A673 (cell line): ENCODE measurements at regions of chr9 and their contacts with region 1.

Region 1: DNA sequence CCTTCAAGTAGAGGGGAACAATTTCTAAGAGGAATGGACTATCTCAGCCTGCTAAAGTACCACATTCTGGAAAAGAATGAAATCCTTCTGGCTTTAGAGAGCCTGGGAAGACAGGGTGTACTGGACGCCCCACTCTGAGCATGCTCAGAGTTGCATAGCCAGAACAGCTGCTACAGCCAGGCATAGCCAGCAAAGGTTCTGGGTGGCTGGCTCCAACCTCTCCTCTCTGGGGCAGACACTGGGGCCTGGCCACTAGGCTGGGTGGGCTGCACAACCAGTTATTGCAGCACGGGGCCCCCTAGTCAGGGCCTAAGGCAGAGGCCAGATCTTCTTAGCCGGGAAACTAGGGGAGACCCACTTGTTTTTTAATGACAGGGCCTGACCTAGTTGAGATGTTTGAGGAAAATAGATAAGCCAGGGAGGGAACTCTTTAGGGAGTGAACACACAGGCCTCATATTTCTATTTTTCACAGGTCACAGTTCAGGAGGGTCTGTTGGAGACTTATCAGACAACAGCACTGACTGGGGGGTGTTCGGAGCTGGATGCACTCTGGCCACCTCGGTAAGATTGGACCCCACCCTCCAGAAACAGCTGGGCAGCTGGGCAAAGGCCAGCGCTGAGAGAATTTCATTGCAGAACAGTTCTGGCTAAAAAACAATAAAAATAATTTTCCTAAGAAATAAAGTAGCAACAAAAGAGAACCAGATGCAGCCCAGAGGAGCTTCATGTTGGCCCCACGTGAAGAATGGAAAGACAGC is 142.9 kb downstream of the LPAR1 start:
- DNase-seq: no peak
- H3K4me3 ChIP-seq: no peak overlapping the region
- H3K27ac ChIP-seq: no peak overlapping the region
- H3K4me1 ChIP-seq: peaks cover 27% of the 10 kb centered on the region
- H3K27me3 ChIP-seq: no peaks in the 10 kb centered on the region
- CTCF ChIP-seq: no peak

Region 2: GRCh38 chr9:110977259-110977709 is 82.0 kb after region 1 on chr9:
- CTCF ChIA-PET with region 1: no interaction called
- POLR2A ChIA-PET with region 1: no interaction called
- intact Hi-C with region 1: loop called (anchors 2 kb)
- DNase-seq: peak; percentile 75
- H3K4me3 ChIP-seq: no peak overlapping the region
- H3K27ac ChIP-seq: peak overlapping the region; percentile 90
- H3K4me1 ChIP-seq: peaks cover 71% of the 10 kb centered on the region
- H3K27me3 ChIP-seq: no peaks in the 10 kb centered on the region
- CTCF ChIP-seq: no peak

Region 3: DNA sequence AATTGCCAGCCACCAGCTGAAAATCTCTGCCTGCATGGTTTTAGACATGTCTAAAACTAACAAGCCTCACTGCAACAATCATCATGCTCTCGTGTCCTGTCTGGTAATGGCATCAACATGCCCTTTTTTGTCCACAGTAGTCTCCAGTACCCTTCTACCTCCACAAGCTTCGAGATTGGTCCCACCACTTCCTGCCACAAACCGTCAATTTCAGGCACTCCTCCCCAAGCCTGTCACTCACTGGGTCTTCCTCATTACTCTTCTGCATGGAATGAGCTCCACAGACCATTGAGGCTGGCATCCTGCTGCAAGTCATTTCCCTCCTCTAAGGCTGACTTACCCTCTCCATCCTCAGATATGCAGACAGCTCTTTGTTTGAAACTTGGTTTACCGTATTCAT is 133.9 kb after region 1 on chr9:
- CTCF ChIA-PET with region 1: no interaction called
- POLR2A ChIA-PET with region 1: no interaction called
- intact Hi-C with region 1: loop called (anchors 5 kb)
- DNase-seq: peak; percentile 60
- H3K4me3 ChIP-seq: no peak overlapping the region
- H3K27ac ChIP-seq: peak overlapping the region; percentile 6
- H3K4me1 ChIP-seq: peaks cover 42% of the 10 kb centered on the region
- H3K27me3 ChIP-seq: no peaks in the 10 kb centered on the region
- CTCF ChIP-seq: no peak

Region 4: GRCh38 chr9:111298731-111299598 is 403.6 kb after region 1 on chr9:
- CTCF ChIA-PET with region 1: interaction called, 3 read pairs
- POLR2A ChIA-PET with region 1: no interaction called
- intact Hi-C with region 1: loop called (anchors 10 kb)
- DNase-seq: peak; percentile 76
- H3K4me3 ChIP-seq: peak overlapping the region; percentile 13
- H3K27ac ChIP-seq: peak overlapping the region; percentile 10
- H3K4me1 ChIP-seq: peaks cover 9% of the 10 kb centered on the region
- H3K27me3 ChIP-seq: no peaks in the 10 kb centered on the region
- CTCF ChIP-seq: peak; percentile 79